Adrenal gland (tissue), 19 donors: ENCODE measurements at regions of chr12 and their contacts with region 1.

Region 1: DNA sequence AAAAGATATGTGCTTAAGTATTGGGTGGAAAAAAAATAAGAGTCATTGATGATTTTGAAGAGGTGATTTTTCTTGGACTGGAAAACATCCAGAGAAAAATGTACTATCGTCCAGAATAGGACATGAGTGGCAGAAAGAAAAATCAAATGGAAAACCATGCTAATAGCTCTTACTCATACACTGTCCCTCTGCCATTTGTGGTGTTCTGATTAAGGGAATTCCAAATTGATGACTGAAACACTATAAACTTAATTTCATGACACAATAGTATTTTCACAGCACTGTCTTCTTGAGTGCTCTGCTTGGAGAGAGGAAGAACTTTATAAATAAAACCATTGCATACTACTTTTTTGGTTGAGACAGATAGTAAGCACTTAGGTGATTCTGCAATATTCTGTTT is 72.4 kb downstream of the USP15 start:
- DNase-seq: no peak
- H3K4me3 ChIP-seq: no peak overlapping the region
- H3K27ac ChIP-seq: no peak overlapping the region
- H3K4me1 ChIP-seq: peaks cover 0 to 8% of the 10 kb centered on the region in 2 donors
- H3K27me3 ChIP-seq: no peaks in the 10 kb centered on the region
- CTCF ChIP-seq: no peak
- POLR2A ChIP-seq: no peak

Region 2: GRCh38 chr12:62232143-62232729 is 100.4 kb before region 1 on chr12:
- intact Hi-C with region 1: no loop called
- DNase-seq: no peak
- H3K4me3 ChIP-seq: no peak overlapping the region
- H3K27ac ChIP-seq: no peak overlapping the region
- H3K4me1 ChIP-seq: no peaks in the 10 kb centered on the region
- H3K27me3 ChIP-seq: no peaks in the 10 kb centered on the region
- CTCF ChIP-seq: no peak
- POLR2A ChIP-seq: no peak

Region 3: GRCh38 chr12:62259993-62260732 is 72.4 kb before region 1 on chr12 and contains the start of gene USP15:
- intact Hi-C with region 1: loop called in 1 of 2 experiments (anchors 10 kb)
- DNase-seq: peak; percentile 97 to 98 (median 98)
- H3K4me3 ChIP-seq: peak within 1 kb of the TSS; percentile 84 to 99 (median 94)
- H3K27ac ChIP-seq: peak within 1 kb of the TSS; percentile 86 to 98 (median 94)
- H3K4me1 ChIP-seq: peaks cover 15 to 57% of the 10 kb centered on the region in 2 donors
- H3K27me3 ChIP-seq: no peaks in the 10 kb centered on the region
- CTCF ChIP-seq: peak; percentile 55 to 79 (median 68)
- POLR2A ChIP-seq: peak; percentile 75 to 88
- total RNA-seq, gene USP15: 25.9 to 148 (median 56.1) TPM